CD4-positive, alpha-beta memory T cell (primary cell): ENCODE measurements at regions of chr11 and their contacts with region 1.

Region 1: DNA sequence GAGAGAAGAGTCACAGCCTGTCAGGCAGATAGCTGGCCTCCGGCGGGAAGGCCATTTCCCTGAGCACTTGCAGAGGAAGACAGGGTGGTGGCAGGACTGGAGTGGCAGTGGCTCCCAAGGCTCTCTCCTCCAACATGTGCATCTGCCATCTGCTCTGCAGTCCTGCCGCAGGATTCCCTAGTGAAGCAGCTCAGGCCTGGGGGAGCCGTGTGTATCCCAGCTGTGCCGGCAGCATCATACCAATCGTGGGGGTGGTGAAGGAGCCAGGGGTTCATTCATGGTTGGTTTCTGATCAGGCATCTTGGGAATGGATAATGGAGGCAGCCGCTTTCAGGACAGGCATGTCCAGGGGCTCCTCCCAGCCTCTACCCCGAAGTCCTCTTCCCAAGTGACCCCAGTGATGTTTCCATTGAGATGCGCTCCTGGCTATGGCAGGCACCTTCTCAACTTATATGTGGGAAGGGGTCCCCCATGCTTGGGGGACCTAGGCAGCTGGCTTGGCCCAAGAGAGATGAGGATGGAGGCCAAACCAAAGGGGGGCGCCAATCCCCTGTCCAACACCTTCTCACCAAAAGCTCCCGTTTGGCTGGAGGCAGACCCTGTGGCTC is 6.1 kb downstream of the TAGLN start:
- DNase-seq: no peak
- H3K4me3 ChIP-seq: no peak overlapping the region
- H3K4me3 Mint-ChIP-seq: no peak overlapping the region
- H3K27ac ChIP-seq: no peak overlapping the region
- H3K27ac Mint-ChIP-seq: no peak overlapping the region
- H3K4me1 ChIP-seq: no peaks in the 10 kb centered on the region
- H3K4me1 Mint-ChIP-seq: peaks cover 0 to 8% (median 3%) of the 10 kb centered on the region in 4 donors
- H3K27me3 ChIP-seq: no peaks in the 10 kb centered on the region
- H3K27me3 Mint-ChIP-seq: no peaks in the 10 kb centered on the region

Region 2: DNA sequence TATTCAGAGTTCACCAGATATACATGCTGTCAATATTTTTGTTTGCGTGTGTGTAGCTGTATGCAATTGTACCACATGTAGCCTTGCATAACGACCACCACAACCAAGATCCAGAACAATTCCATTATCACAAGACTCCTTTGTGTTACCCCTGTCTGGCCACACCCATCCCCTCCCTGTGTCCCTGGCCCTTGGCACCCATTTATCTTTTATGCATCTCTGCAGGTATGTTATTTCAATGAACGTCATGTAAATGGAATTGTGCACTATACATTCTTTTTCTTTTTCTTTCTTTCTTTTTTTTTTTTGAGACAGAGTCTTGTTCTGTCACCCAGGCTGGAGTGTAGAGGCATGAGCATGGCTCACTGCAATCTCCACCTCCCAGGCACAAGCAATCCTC is 70.9 kb before region 1 on chr11:
- CTCF ChIA-PET with region 1: no interaction called
- POLR2A ChIA-PET with region 1: no interaction called
- intact Hi-C with region 1: loop called (anchors 5 kb)
- DNase-seq: no peak
- H3K4me3 ChIP-seq: no peak overlapping the region
- H3K4me3 Mint-ChIP-seq: no peak overlapping the region
- H3K27ac ChIP-seq: no peak overlapping the region
- H3K27ac Mint-ChIP-seq: no peak overlapping the region
- H3K4me1 ChIP-seq: no peaks in the 10 kb centered on the region
- H3K4me1 Mint-ChIP-seq: peaks cover 0 to 3% (median 1%) of the 10 kb centered on the region in 4 donors
- H3K27me3 ChIP-seq: no peaks in the 10 kb centered on the region
- H3K27me3 Mint-ChIP-seq: no peaks in the 10 kb centered on the region

Region 3: GRCh38 chr11:117366248-117366647 is 160.9 kb after region 1 on chr11:
- CTCF ChIA-PET with region 1: no interaction called
- POLR2A ChIA-PET with region 1: no interaction called
- intact Hi-C with region 1: no loop called
- DNase-seq: no peak
- H3K4me3 ChIP-seq: no peak overlapping the region
- H3K4me3 Mint-ChIP-seq: no peak overlapping the region
- H3K27ac ChIP-seq: no peak overlapping the region
- H3K27ac Mint-ChIP-seq: peak overlapping the region in 1 of 7 donors; percentile 65
- H3K4me1 ChIP-seq: no peaks in the 10 kb centered on the region
- H3K4me1 Mint-ChIP-seq: no peaks in the 10 kb centered on the region
- H3K27me3 ChIP-seq: no peaks in the 10 kb centered on the region
- H3K27me3 Mint-ChIP-seq: no peaks in the 10 kb centered on the region

Region 4: DNA sequence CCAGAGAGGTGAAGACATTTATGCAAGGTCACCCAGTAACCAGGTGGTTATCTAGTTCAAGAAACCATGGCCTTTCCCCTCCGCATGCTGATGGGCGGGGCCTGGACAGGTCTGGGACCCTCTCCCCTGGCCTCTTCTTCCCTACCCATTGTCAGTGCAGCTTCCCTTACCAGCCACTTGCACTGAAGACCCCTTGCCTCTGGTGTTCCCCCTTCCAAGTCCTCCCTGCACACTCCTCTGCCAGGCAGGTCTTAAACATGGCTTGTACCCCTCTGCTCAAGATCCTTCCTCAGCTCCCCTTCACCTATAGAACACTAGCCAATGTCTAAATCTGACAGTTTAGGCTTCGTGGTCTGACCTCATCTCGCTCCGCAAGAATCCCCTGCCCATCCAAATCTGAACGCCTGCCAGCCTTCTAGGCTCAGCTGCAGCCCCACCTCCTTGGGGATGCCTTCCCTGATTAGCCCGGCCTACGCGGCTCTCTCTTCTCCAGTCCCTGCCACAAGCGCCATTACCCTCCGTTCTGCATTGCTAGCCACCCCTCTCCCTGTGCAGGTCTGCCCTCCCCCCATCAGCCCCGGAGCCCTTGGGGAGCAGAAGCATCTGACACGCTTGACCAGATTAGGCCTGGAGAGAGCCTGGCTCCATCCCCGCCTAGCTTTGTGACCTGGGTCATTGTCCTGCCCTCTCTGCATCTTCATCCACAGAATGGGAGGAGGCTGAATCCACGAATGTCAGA is 377.9 kb after region 1 on chr11:
- CTCF ChIA-PET with region 1: no interaction called
- POLR2A ChIA-PET with region 1: no interaction called
- intact Hi-C with region 1: no loop called
- DNase-seq: no peak
- H3K4me3 ChIP-seq: no peak overlapping the region
- H3K4me3 Mint-ChIP-seq: no peak overlapping the region
- H3K27ac ChIP-seq: no peak overlapping the region
- H3K27ac Mint-ChIP-seq: no peak overlapping the region
- H3K4me1 ChIP-seq: no peaks in the 10 kb centered on the region
- H3K4me1 Mint-ChIP-seq: no peaks in the 10 kb centered on the region
- H3K27me3 ChIP-seq: no peaks in the 10 kb centered on the region
- H3K27me3 Mint-ChIP-seq: peaks cover 19 to 22% of the 10 kb centered on the region in 2 donors